Activated CD4-positive, alpha-beta T cell treated with anti-CD3 and anti-CD28 coated beads for 36 hours (primary cell): ENCODE measurements at regions of chr4 and their contacts with region 1.

Region 1: GRCh38 chr4:77082886-77083608 is 7.3 kb upstream of the CCNI start:
- DNase-seq: no peak
- ATAC-seq: no peak
- H3K4me3 Mint-ChIP-seq: no peak overlapping the region
- H3K27ac Mint-ChIP-seq: no peak overlapping the region
- H3K4me1 Mint-ChIP-seq: peaks cover 19% of the 10 kb centered on the region
- H3K27me3 Mint-ChIP-seq: no peaks in the 10 kb centered on the region

Region 2: DNA sequence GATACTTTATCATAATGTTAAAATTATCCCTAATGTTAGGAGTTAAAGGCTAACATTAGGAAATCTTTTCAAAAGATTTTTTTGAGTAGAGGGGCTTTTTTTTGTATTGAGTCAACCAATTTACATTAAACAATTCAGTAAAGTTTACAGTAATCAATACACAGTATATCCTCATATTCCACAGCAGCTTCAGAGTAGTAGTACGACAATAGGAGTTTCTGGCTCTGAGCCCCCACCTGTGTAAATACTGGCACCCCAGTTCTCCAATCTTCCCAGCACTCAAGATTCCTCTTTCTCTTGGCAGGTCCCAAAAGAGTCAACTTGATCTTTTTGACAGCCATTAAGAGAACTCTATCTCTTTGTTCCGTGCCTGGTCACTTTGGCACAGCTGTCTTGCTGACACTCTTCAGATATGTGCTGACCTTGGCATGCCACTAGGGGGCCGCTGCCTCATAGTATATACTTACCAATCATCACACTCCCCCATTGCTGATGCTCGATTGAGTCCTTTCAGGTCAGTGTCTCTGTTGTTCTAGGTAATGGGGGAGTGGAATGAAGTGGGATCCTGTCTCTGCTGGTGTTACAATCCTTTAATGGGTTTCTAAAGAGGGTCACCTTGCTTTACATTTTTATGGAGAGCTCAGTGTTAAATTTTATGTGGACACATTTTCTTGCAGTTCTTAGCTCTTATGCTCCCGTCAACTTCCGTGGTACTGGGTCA is 12.2 kb after region 1 on chr4:
- CTCF ChIA-PET with region 1: interaction called, 13 read pairs
- POLR2A ChIA-PET with region 1: no interaction called
- intact Hi-C with region 1: no loop called
- DNase-seq: peak; percentile 76
- ATAC-seq: peak; percentile 99
- H3K4me3 Mint-ChIP-seq: no peak overlapping the region
- H3K27ac Mint-ChIP-seq: no peak overlapping the region
- H3K4me1 Mint-ChIP-seq: peaks cover 8% of the 10 kb centered on the region
- H3K27me3 Mint-ChIP-seq: no peaks in the 10 kb centered on the region

Region 3: DNA sequence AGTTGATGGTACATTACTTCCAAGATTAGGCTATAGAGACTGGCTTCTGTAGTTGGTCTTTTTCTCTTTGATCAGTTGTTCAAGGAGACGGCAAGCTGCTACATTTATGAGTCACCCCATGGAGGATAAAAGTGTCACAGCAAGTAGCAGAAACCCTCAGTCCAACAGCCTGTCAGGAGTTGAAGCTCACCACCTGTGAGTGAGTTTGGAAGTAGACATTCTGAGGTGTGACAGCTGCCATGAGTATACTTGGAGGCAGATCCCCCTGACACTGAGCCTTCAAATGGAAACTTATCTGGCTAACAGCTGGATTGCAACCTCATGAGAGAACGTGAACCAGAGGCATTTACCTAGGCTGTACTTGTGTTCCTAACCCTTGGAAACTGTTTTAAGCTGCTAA is 142.0 kb after region 1 on chr4:
- CTCF ChIA-PET with region 1: no interaction called
- POLR2A ChIA-PET with region 1: no interaction called
- intact Hi-C with region 1: no loop called
- DNase-seq: no peak
- ATAC-seq: peak; percentile 61
- H3K4me3 Mint-ChIP-seq: no peak overlapping the region
- H3K27ac Mint-ChIP-seq: no peak overlapping the region
- H3K4me1 Mint-ChIP-seq: no peaks in the 10 kb centered on the region
- H3K27me3 Mint-ChIP-seq: peaks cover 3% of the 10 kb centered on the region

Region 4: GRCh38 chr4:77443941-77444340 is 360.9 kb after region 1 on chr4:
- CTCF ChIA-PET with region 1: no interaction called
- POLR2A ChIA-PET with region 1: no interaction called
- intact Hi-C with region 1: no loop called
- DNase-seq: no peak
- ATAC-seq: no peak
- H3K4me3 Mint-ChIP-seq: no peak overlapping the region
- H3K27ac Mint-ChIP-seq: no peak overlapping the region
- H3K4me1 Mint-ChIP-seq: no peaks in the 10 kb centered on the region
- H3K27me3 Mint-ChIP-seq: peaks cover 11% of the 10 kb centered on the region